ENCODE measurements at regions of chr3 and their contacts with region 1.

Region 1: DNA sequence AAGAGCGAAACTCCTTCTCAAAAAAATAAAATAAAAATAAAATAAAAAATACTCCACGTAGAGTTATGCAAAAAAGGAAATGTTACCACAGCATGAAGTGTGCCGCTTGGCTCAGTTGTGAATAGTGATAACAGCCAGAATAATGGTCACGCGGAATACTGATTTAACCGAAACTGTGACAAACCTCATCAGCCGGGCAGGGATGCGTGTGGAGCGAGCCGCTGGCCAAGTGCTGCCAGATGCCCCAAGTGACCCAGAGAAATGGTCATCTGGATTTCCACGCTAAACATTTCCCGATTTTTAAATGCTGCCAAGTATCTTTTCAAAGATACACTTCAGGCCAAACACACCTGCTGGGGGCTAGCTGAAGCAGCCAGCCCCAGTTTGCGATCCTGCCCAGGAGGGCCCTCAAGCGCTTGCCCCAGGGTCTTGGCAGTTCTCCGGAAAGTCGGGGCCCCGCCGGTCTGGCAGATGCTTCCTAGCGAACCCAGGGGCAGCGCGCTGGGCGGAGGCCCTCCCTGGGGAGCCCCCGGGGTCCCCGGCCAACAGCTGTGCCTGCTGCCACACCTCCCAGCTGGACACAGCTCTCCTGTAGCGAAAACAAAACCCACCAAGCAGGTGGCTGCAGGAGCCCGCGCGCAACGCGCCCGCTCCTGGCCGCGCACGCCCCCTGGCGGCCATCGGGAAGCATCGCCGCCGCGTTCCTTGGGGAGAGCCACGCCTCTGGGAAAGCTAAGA is 35.1 kb downstream of the CMTM6 start:
- DNase-seq: peak; percentile 53 to 83 (median 71)
- H3K4me3 ChIP-seq: peak overlapping the region; percentile 37
- H3K27ac ChIP-seq: no peak overlapping the region
- H3K4me1 ChIP-seq: peaks cover 2% of the 10 kb centered on the region
- H3K27me3 ChIP-seq: no peaks in the 10 kb centered on the region
- CTCF ChIP-seq: peak; percentile 80 to 94 (median 88)
- EP300 ChIP-seq: no peak
- POLR2A ChIP-seq: no peak

Region 2: GRCh38 chr3:32296256-32297204 is 171.0 kb before region 1 on chr3:
- intact Hi-C with region 1: loop called in 2 of 4 experiments (anchors 5 to 10 kb)
- DNase-seq: peak; percentile 30 to 65 (median 53)
- H3K4me3 ChIP-seq: no peak overlapping the region
- H3K27ac ChIP-seq: no peak overlapping the region
- H3K4me1 ChIP-seq: no peaks in the 10 kb centered on the region
- H3K27me3 ChIP-seq: no peaks in the 10 kb centered on the region
- CTCF ChIP-seq: peak; percentile 53 to 67 (median 57)
- EP300 ChIP-seq: no peak
- POLR2A ChIP-seq: no peak

Region 3: GRCh38 chr3:32374788-32375595 is 92.5 kb before region 1 on chr3:
- intact Hi-C with region 1: loop called in 3 of 4 experiments (anchors 5 to 10 kb)
- DNase-seq: peak in 2 of 5 donors; percentile 32 to 54
- H3K4me3 ChIP-seq: no peak overlapping the region
- H3K27ac ChIP-seq: no peak overlapping the region
- H3K4me1 ChIP-seq: no peaks in the 10 kb centered on the region
- H3K27me3 ChIP-seq: no peaks in the 10 kb centered on the region
- CTCF ChIP-seq: peak in 2 of 3 donors; percentile 47 to 57
- EP300 ChIP-seq: no peak
- POLR2A ChIP-seq: no peak

Region 4: GRCh38 chr3:32384938-32385337 is 82.6 kb before region 1 on chr3:
- intact Hi-C with region 1: loop called in 1 of 4 experiments (anchors 5 kb)
- DNase-seq: no peak
- H3K4me3 ChIP-seq: no peak overlapping the region
- H3K27ac ChIP-seq: no peak overlapping the region
- H3K4me1 ChIP-seq: peaks cover 1% of the 10 kb centered on the region
- H3K27me3 ChIP-seq: no peaks in the 10 kb centered on the region
- CTCF ChIP-seq: no peak
- EP300 ChIP-seq: no peak
- POLR2A ChIP-seq: no peak

Region 5: GRCh38 chr3:32511005-32511404 is 43.5 kb after region 1 on chr3:
- intact Hi-C with region 1: no loop called
- DNase-seq: no peak
- H3K4me3 ChIP-seq: no peak overlapping the region
- H3K27ac ChIP-seq: no peak overlapping the region
- H3K4me1 ChIP-seq: no peaks in the 10 kb centered on the region
- H3K27me3 ChIP-seq: no peaks in the 10 kb centered on the region
- CTCF ChIP-seq: no peak
- EP300 ChIP-seq: no peak
- POLR2A ChIP-seq: no peak

Measured in ovary (tissue), 10 donors.